ENCODE measurements at regions of chr16 and their contacts with region 1.

Region 1: GRCh38 chr16:74862741-74863244 is 88.2 kb upstream of the FA2H start:
- DNase-seq: no peak
- H3K4me3 ChIP-seq: no peak overlapping the region
- H3K27ac ChIP-seq: no peak overlapping the region
- H3K4me1 ChIP-seq: peaks cover 0 to 4% of the 10 kb centered on the region in 2 donors
- H3K27me3 ChIP-seq: no peaks in the 10 kb centered on the region
- CTCF ChIP-seq: peak; percentile 69 to 94 (median 87)
- POLR2A ChIP-seq: no peak

Region 2: DNA sequence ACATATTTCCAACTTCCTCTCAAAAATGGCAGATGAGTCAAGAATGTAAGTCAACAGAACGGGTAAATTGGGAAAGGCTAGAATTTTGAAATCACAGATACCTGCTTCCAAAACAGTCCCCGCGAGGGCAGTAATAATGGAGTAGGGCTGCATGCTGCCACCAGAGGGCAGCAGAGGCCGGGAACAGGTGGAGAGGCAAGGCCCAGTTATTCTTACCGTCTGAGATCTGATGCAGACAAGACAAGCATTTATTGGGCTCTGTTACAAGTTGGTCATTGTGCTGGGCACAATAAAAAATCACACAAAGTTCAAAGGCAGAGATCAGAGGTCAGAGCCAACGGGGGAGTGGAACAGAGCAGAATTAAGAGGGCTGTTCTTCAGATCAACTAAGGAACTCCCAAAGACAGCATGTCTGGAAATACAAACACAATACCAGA is 153.3 kb before region 1 on chr16:
- intact Hi-C with region 1: loop called (anchors 2 to 10 kb)
- DNase-seq: peak; percentile 75 to 90 (median 84)
- H3K4me3 ChIP-seq: no peak overlapping the region
- H3K27ac ChIP-seq: no peak overlapping the region
- H3K4me1 ChIP-seq: no peaks in the 10 kb centered on the region
- H3K27me3 ChIP-seq: no peaks in the 10 kb centered on the region
- CTCF ChIP-seq: peak; percentile 92 to 97 (median 94)
- POLR2A ChIP-seq: no peak

Region 3: GRCh38 chr16:74813109-74813641 is 49.6 kb before region 1 on chr16:
- intact Hi-C with region 1: loop called in 1 of 2 experiments (anchors 2 kb)
- DNase-seq: peak; percentile 73 to 87 (median 82)
- H3K4me3 ChIP-seq: no peak overlapping the region
- H3K27ac ChIP-seq: no peak overlapping the region
- H3K4me1 ChIP-seq: no peaks in the 10 kb centered on the region
- H3K27me3 ChIP-seq: no peaks in the 10 kb centered on the region
- CTCF ChIP-seq: peak; percentile 89 to 96 (median 94)
- POLR2A ChIP-seq: no peak

Measured in adrenal gland (tissue), 19 donors.